Activated naive CD4-positive, alpha-beta T cell treated with anti-CD3 and anti-CD28 coated beads for 36 hours (primary cell): ENCODE measurements at regions of chr6 and their contacts with region 1.

Region 1: DNA sequence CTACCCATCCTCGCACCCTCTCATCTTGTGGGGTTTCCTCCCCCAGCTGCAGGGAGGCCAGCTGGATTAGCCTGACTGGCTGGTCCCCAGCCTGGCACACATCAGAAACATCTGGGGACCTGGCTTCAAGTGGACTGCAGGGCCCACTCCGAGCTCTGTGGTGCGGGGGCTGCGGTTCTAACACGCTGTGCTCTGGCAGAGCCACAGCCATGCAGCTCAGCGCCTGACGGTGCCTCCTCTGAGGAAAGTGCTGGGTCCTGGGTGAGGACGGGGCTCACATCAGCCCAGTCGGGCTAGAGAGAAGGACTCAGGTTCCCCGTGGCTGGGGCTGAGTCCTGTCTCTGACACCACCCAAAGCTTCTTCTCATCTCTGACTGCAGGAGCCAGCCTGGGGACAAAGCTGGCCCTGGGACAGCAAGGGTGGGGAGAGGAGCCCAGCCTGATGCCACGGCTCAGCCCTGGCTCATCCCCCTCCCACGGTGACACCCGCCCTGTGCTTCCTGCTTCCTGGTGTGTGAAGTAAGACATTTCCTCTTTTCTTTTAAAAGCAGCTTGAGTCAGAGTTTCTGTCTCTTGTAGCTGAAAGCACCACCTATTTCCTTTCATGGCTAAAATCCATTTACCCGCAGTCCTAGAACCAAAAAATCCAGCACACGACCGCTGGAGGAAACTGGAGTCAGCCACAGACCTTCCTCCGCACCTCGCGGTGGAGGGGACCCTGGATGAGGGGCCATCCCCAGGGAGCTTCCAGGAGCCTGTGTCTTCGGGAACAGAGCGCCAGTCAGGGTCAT is 127.4 kb upstream of the AFDN start:
- DNase-seq: peak; percentile 87
- H3K4me3 Mint-ChIP-seq: peak overlapping the region; percentile 61
- H3K27ac Mint-ChIP-seq: peak overlapping the region; percentile 92
- H3K4me1 Mint-ChIP-seq: peaks cover 19% of the 10 kb centered on the region
- H3K27me3 Mint-ChIP-seq: peaks cover 8% of the 10 kb centered on the region

Region 2: GRCh38 chr6:166556871-166557322 is 1142.4 kb before region 1 on chr6:
- CTCF ChIA-PET with region 1: no interaction called
- intact Hi-C with region 1: no loop called
- DNase-seq: peak; percentile 21
- H3K4me3 Mint-ChIP-seq: no peak overlapping the region
- H3K27ac Mint-ChIP-seq: no peak overlapping the region
- H3K4me1 Mint-ChIP-seq: peaks cover 5% of the 10 kb centered on the region
- H3K27me3 Mint-ChIP-seq: no peaks in the 10 kb centered on the region

Region 3: DNA sequence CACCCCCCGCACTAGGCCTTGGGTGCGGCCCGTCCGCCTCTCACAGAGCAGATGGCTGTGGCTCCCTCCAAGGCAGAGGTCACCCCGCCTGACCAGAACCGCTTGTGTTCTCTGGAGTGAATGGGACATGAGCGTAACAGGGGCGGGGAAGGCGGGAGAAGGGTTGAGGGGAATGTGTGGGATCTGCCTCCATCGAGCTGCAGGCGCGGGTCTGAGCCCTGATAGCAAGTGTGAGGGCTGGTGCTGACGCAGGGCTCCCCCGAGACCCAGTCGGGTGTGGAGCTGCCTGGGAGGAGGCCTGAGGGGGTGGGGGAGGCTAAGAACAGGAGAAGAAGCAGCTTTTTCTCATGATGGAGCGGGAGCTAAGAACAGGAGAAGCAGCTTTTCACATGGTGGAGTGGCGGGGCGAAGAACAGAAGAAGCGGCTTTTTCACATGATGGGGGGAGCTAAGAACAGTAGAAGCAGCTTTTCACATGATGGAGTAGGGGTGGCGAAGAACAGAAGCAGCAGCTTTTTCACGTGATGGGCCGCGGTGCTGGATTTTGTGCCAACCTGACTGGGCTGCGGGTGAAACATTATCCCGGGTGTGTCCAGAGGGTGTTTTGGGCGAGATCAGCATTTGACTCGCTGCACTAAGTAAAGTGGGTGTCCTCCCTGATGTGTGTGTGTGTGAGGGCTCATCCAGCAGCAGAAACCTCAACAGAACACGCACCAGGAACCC is 205.2 kb before region 1 on chr6:
- CTCF ChIA-PET with region 1: no interaction called
- intact Hi-C with region 1: no loop called
- DNase-seq: no peak
- H3K4me3 Mint-ChIP-seq: no peak overlapping the region
- H3K27ac Mint-ChIP-seq: no peak overlapping the region
- H3K4me1 Mint-ChIP-seq: no peaks in the 10 kb centered on the region
- H3K27me3 Mint-ChIP-seq: peaks cover 25% of the 10 kb centered on the region

Region 4: GRCh38 chr6:167826230-167826895 is 127.0 kb after region 1 on chr6:
- CTCF ChIA-PET with region 1: interaction called, 3 read pairs
- intact Hi-C with region 1: loop called (anchors 5 kb)
- DNase-seq: peak; percentile 69
- H3K4me3 Mint-ChIP-seq: peak overlapping the region; percentile 78
- H3K27ac Mint-ChIP-seq: no peak overlapping the region
- H3K4me1 Mint-ChIP-seq: peaks cover 19% of the 10 kb centered on the region
- H3K27me3 Mint-ChIP-seq: peaks cover 59% of the 10 kb centered on the region